Activated naive CD4-positive, alpha-beta T cell treated with anti-CD3 and anti-CD28 coated beads for 36 hours (primary cell): ENCODE measurements at regions of chr19 and their contacts with region 1.

Region 1: GRCh38 chr19:58380722-58381466 is at the start of gene ZNF837:
- DNase-seq: peak; percentile 99
- H3K4me3 Mint-ChIP-seq: peak within 1 kb of the TSS; percentile 86
- H3K27ac Mint-ChIP-seq: peak within 1 kb of the TSS; percentile 90
- H3K4me1 Mint-ChIP-seq: peaks cover 20% of the 10 kb centered on the region
- H3K27me3 Mint-ChIP-seq: no peaks in the 10 kb centered on the region
- total RNA-seq, gene ZNF837: 1.7 to 1.9 TPM

Region 2: GRCh38 chr19:58228585-58229254 is 152.2 kb before region 1 on chr19 and contains the start of gene ZNF544:
- CTCF ChIA-PET with region 1: interaction called, 3 read pairs
- intact Hi-C with region 1: loop called (anchors 10 kb)
- DNase-seq: peak; percentile 76
- H3K4me3 Mint-ChIP-seq: peak within 1 kb of the TSS; percentile 94
- H3K27ac Mint-ChIP-seq: peak within 1 kb of the TSS; percentile 92
- H3K4me1 Mint-ChIP-seq: peaks cover 29% of the 10 kb centered on the region
- H3K27me3 Mint-ChIP-seq: no peaks in the 10 kb centered on the region
- total RNA-seq, gene ZNF544: 32.4 to 35.4 TPM

Region 3: DNA sequence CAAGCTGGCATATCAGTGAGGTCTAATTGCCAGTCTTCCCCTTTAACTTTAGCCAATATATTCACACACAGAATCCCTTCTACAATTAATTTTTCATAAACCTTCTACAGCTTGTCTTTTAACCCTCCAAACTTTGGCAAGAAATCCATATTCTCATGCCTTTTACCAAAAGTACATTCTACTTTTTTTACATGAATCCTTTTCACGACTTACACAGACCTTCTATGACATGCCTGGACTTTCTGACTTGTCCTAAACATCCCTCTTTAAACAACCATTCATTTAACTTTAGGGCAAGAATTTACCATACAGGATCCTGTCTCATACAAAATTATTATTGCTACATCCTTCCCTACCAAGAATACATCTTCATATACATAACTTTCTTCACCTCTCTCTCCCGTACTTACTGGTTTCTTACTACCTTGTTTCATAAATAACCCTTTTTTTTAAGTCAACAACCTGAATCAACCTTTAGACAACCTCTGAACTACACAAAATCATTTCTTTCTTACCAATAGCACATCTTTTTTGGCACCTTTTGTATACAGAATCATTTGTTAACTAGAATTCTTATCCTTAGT is 128.7 kb before region 1 on chr19:
- CTCF ChIA-PET with region 1: no interaction called
- intact Hi-C with region 1: no loop called
- DNase-seq: no peak
- H3K4me3 Mint-ChIP-seq: no peak overlapping the region
- H3K27ac Mint-ChIP-seq: no peak overlapping the region
- H3K4me1 Mint-ChIP-seq: no peaks in the 10 kb centered on the region
- H3K27me3 Mint-ChIP-seq: no peaks in the 10 kb centered on the region

Region 4: GRCh38 chr19:58346961-58347931 is 33.6 kb before region 1 on chr19:
- CTCF ChIA-PET with region 1: no interaction called
- intact Hi-C with region 1: no loop called
- DNase-seq: peak; percentile 69
- H3K4me3 Mint-ChIP-seq: peak overlapping the region; percentile 87
- H3K27ac Mint-ChIP-seq: peak overlapping the region; percentile 21
- H3K4me1 Mint-ChIP-seq: peaks cover 23% of the 10 kb centered on the region
- H3K27me3 Mint-ChIP-seq: peaks cover 5% of the 10 kb centered on the region

Region 5: DNA sequence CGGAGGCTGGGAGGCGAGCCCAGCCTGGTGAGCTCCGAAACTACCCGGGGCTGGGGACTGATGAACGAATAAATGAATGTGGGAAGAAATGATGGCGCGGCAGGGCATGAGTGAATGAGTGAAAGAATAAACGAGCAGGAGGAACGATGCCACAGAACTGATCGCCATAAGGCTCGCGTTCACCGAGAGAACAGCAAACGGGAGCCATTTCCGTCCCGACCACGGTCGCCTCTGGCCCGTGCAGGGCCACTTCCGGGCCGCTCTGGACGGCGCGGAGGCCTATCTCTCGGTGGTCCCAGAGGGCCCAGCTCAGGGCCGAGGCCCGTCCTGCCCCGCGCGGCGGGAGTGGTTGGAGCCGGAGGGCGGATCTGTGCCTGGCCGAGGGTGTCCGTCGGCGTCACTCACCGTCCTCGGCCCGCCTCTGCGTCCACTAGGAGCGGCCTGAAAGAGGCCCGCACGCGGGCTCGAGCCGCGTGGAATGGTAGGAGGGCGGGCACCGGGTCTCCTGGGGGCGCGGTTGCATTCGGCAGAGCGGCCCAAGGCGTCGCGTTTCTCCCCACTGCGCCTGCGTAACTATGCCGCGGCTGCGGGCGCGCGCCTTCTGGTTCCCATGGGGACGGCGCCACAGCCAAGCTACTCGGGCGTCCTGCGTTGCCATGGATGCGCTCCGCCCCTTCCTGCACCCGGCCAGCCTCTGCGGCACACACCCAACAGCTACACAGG is 18.5 kb before region 1 on chr19 and contains the start of gene ZNF497:
- CTCF ChIA-PET with region 1: no interaction called
- intact Hi-C with region 1: loop called (anchors 1 kb)
- DNase-seq: peak; percentile 97
- H3K4me3 Mint-ChIP-seq: peak within 1 kb of the TSS; percentile 93
- H3K27ac Mint-ChIP-seq: peak within 1 kb of the TSS; percentile 87
- H3K4me1 Mint-ChIP-seq: peaks cover 8% of the 10 kb centered on the region
- H3K27me3 Mint-ChIP-seq: no peaks in the 10 kb centered on the region
- total RNA-seq, gene ZNF497: 0.40 to 0.41 TPM

Region 6: GRCh38 chr19:58439576-58440554 is 59.0 kb after region 1 on chr19 and contains the start of gene ZNF132:
- CTCF ChIA-PET with region 1: no interaction called
- intact Hi-C with region 1: loop called (anchors 1 kb)
- DNase-seq: peak; percentile 98
- H3K4me3 Mint-ChIP-seq: peak within 1 kb of the TSS; percentile 95
- H3K27ac Mint-ChIP-seq: peak within 1 kb of the TSS; percentile 88
- H3K4me1 Mint-ChIP-seq: peaks cover 18% of the 10 kb centered on the region
- H3K27me3 Mint-ChIP-seq: no peaks in the 10 kb centered on the region
- total RNA-seq, gene ZNF132: 2.8 to 2.9 TPM

Region 7: DNA sequence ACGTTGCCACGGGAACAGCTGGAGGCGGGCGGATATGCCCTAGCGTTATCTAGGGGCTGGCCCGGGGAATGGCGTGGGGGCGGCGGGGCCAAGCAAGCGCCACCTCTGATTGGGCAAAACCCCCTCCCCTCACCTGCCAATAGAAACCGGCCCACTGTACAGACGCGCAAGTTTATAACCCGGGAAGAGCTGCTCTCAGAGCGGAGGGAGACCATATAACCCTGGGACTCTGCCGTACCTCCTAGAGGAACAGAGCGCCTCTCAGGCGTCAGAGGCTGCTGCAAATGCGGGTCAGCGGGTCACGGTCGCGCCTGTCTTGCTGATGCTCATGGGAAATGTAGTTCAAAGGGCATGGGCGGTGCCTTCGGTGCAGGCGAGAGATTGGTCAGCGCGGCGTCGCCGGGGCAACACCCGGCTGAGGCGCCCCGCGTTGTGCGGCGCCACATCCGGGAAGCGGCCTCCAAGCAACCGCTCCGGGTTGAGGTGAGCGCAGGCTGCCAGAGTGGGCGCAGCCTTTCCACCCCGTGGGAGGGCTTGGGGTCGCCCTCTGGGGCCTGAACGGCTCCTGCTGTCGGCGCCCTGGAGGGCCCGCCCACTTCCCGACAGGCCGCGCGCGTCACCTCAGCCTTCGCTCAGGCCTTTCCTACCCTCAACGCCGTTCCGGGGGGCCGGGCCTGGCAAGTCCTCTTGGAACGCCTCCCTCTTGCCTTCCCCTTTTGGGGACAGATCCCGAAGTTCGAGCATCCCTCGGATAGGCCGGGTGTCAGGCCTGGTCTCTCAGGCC is 95.0 kb after region 1 on chr19 and contains the start of gene ZNF446:
- CTCF ChIA-PET with region 1: no interaction called
- intact Hi-C with region 1: loop called (anchors 1 kb)
- DNase-seq: peak; percentile 97
- H3K4me3 Mint-ChIP-seq: peak within 1 kb of the TSS; percentile 94
- H3K27ac Mint-ChIP-seq: peak within 1 kb of the TSS; percentile 97
- H3K4me1 Mint-ChIP-seq: peaks cover 13% of the 10 kb centered on the region
- H3K27me3 Mint-ChIP-seq: no peaks in the 10 kb centered on the region
- total RNA-seq, gene ZNF446: 2.6 to 2.9 TPM